Left colon (tissue), 2 donors: ENCODE measurements at regions of chr2 and their contacts with region 1.

Region 1: DNA sequence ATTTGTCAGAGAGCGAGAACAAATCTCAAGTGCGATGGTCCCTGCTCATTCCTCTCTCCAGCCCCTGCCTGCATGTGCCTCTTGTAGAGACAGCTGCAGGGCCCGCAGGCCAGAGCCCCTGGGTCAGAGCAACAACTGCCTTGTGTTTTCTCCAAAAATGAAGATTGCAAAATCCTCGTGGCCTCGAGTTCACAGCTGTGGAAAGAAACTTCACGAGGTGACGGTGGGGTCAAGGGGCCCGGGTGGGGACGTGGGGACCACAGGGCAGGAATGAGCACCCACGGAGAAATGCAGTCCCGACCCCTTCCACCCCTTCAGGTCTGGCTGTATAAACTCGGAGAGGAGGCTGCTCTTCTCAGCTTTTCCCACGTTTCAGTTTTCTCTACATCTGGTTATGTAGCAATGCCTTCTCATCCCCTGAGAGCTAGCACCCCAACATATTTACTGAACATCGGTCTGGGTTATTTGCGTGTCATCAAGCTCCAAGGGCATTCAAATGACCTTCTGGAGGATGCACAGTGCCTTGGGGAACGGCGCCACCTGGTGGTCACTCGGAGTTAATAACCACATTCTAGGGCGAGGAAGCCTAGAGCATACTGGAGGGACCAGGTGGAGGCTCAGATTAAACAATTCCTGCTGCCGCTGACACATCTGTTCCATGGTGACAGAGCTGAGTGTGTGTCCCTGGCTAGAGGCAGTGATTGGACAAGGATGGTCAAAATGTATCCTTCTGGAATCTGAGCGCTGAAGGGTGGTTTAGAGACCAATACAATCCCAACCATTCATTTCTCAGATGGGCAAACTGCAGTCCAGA is 91.4 kb upstream of the CYRIA start:
- DNase-seq: peak; percentile 45 to 80
- ATAC-seq: peak; percentile 82

Region 2: GRCh38 chr2:16553226-16553625 is 203.8 kb before region 1 on chr2:
- intact Hi-C with region 1: loop called in 1 of 2 experiments (anchors 10 kb)
- DNase-seq: peak in 1 of 2 donors; percentile 26
- ATAC-seq: no peak

Region 3: GRCh38 chr2:16608661-16609643 is 148.1 kb before region 1 on chr2:
- intact Hi-C with region 1: loop called in 1 of 2 experiments (anchors 10 kb)
- DNase-seq: peak; percentile 66 to 86
- ATAC-seq: peak; percentile 92

Region 4: GRCh38 chr2:16617282-16618261 is 139.5 kb before region 1 on chr2:
- intact Hi-C with region 1: loop called in 1 of 2 experiments (anchors 5 kb)
- DNase-seq: no peak
- ATAC-seq: no peak